ENCODE measurements at regions of chr5 and their contacts with region 1.

Region 1: DNA sequence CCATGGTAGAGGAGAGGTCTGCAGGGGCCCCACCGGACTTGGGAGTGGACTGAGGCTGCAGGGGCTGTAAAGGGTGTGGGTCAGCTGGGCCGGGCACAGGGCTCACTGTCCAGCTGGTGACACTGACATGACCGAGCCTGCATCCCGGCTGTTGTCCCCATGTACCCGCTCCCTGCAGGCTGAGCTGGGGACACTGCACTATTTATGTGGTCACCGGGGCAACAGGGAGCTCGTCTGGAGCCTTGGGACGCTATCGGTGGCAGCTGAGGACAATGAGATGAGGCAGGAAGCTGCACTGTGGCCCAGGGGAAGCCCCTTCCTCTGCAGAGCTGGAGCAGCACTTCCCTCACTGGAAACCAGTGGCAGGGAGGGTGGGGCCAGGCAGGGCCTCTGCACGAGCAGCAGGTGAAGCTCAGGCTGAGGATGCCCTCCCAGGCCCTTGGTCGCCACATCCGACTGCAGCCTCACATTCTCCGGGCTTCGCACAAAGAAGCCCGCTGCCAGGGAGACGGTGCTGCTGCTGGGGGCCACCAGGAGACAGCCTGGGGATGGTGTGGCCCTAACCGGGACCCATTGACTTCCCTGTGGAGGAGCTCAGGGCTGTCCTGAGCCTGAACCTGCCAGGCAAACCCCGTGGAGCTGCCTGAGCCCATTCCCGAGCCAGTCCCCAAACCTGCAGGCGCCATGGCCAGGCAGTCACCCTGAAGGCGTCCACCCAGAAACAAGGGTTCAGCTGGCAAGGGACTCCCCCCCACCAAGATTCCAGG is 26.4 kb downstream of the ZDHHC11B start:
- DNase-seq: peak; percentile 62
- H3K4me3 Mint-ChIP-seq: no peak overlapping the region
- H3K27ac Mint-ChIP-seq: no peak overlapping the region
- H3K4me1 Mint-ChIP-seq: peaks cover 13% of the 10 kb centered on the region
- H3K27me3 Mint-ChIP-seq: no peaks in the 10 kb centered on the region

Region 2: DNA sequence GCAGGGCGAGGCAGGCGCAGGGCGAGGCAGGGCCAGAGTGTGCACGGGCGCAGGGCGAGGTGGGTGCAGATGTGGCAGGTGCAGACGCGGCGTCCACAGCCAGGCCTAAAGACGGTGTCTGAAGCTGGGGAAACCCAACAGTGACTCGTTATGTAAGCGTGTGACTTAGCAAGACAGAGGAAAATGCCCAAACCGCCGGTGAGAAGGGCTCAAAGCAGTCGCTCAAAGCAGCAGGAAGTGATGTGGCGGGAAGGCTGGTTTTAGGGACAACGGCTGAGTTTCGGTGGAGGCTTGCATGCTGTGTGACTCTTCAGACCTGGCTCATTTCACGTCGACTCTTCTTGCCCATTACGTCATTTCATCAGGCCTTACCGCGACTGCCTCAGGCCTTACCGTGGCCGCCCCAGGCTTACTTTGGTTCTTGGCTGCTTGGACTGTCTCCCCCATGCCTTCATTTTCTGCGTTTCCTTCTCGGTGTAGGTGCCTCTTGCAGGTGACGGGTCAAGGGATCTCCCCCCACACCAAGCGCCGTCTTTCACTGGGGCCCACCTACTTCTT is 365.6 kb before region 1 on chr5:
- CTCF ChIA-PET with region 1: no interaction called
- intact Hi-C with region 1: no loop called
- DNase-seq: peak; percentile 96
- H3K4me3 Mint-ChIP-seq: peak overlapping the region; percentile 69
- H3K27ac Mint-ChIP-seq: peak overlapping the region; percentile 91
- H3K4me1 Mint-ChIP-seq: peaks cover 27% of the 10 kb centered on the region
- H3K27me3 Mint-ChIP-seq: no peaks in the 10 kb centered on the region

Region 3: GRCh38 chr5:850511-851006 is 92.4 kb after region 1 on chr5 and contains the start of gene ZDHHC11:
- CTCF ChIA-PET with region 1: no interaction called
- intact Hi-C with region 1: loop called (anchors 2 kb)
- DNase-seq: no peak
- H3K4me3 Mint-ChIP-seq: no peak within 1 kb of the TSS
- H3K27ac Mint-ChIP-seq: no peak within 1 kb of the TSS
- H3K4me1 Mint-ChIP-seq: peaks cover 6% of the 10 kb centered on the region
- H3K27me3 Mint-ChIP-seq: no peaks in the 10 kb centered on the region
- total RNA-seq, gene ZDHHC11: 3.6 TPM

Measured in activated naive CD4-positive, alpha-beta T cell treated with anti-CD3 and anti-CD28 coated beads for 36 hours (primary cell).